ENCODE measurements at regions of chr13 and their contacts with region 1.

Region 1: GRCh38 chr13:102596147-102597028 is at the start of gene TPP2:
- DNase-seq: peak; percentile 98
- ATAC-seq: peak; percentile 94
- H3K4me3 ChIP-seq: peak within 1 kb of the TSS; percentile 80
- H3K27ac ChIP-seq: peak within 1 kb of the TSS; percentile 94
- H3K4me1 ChIP-seq: 0 out of 2 replicates have a peak, but pooled peaks cover 3% of the 10 kb centered on the region
- H3K27me3 ChIP-seq: no peaks in the 10 kb centered on the region
- CTCF ChIP-seq: no peak
- POLR2A ChIP-seq: peak; percentile 79
- RAD21 ChIP-seq: no peak
- total RNA-seq, gene TPP2: 52.9 and 62.2 TPM in 2 replicates

Region 2: GRCh38 chr13:102128216-102128810 is 468.1 kb before region 1 on chr13:
- CTCF ChIA-PET with region 1: no interaction called
- POLR2A ChIA-PET with region 1: no interaction called
- dilution Hi-C with region 1: no loop called
- in situ Hi-C with region 1: no loop called
- intact Hi-C with region 1: no loop called
- DNase-seq: peak; percentile 42
- ATAC-seq: peak; percentile 35
- H3K4me3 ChIP-seq: no peak overlapping the region
- H3K27ac ChIP-seq: no peak overlapping the region
- H3K4me1 ChIP-seq: no peaks in the 10 kb centered on the region
- H3K27me3 ChIP-seq: no peaks in the 10 kb centered on the region
- CTCF ChIP-seq: no peak
- POLR2A ChIP-seq: no peak
- RAD21 ChIP-seq: no peak

Region 3: GRCh38 chr13:102642475-102642874 is 46.1 kb after region 1 on chr13:
- CTCF ChIA-PET with region 1: no interaction called
- POLR2A ChIA-PET with region 1: no interaction called
- dilution Hi-C with region 1: no loop called
- in situ Hi-C with region 1: no loop called
- intact Hi-C with region 1: no loop called
- DNase-seq: no peak
- ATAC-seq: no peak
- H3K4me3 ChIP-seq: no peak overlapping the region
- H3K27ac ChIP-seq: no peak overlapping the region
- H3K4me1 ChIP-seq: no peaks in the 10 kb centered on the region
- H3K27me3 ChIP-seq: no peaks in the 10 kb centered on the region
- CTCF ChIP-seq: no peak
- POLR2A ChIP-seq: no peak
- RAD21 ChIP-seq: no peak

Region 4: DNA sequence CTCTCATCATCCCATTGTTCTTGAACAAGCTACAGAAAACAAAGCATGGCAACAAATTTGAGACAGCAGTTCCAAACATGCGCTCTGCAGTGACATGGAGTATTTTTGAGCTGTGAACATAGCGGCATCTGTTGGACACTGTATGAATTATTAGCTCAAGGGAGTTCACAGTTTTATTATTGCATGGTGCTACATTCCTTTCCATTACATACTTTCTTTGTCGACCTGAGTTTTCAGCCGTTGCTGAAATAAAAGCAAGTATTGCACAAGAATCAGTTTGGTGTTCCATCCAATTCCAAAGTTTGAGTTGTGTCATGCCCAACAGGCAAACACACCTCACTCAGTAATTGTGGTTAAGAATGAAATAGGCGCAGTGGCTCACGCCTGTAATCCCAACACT is 128.5 kb after region 1 on chr13:
- CTCF ChIA-PET with region 1: interaction called, 3 read pairs
- POLR2A ChIA-PET with region 1: no interaction called
- dilution Hi-C with region 1: no loop called
- in situ Hi-C with region 1: no loop called
- intact Hi-C with region 1: loop called (anchors 5 kb)
- DNase-seq: peak; percentile 24
- ATAC-seq: peak; percentile 80
- H3K4me3 ChIP-seq: no peak overlapping the region
- H3K27ac ChIP-seq: no peak overlapping the region
- H3K4me1 ChIP-seq: no peaks in the 10 kb centered on the region
- H3K27me3 ChIP-seq: no peaks in the 10 kb centered on the region; the same call in 1 of the 2 replicates
- CTCF ChIP-seq: peak; percentile 40
- POLR2A ChIP-seq: no peak
- RAD21 ChIP-seq: peak; percentile 48

Region 5: DNA sequence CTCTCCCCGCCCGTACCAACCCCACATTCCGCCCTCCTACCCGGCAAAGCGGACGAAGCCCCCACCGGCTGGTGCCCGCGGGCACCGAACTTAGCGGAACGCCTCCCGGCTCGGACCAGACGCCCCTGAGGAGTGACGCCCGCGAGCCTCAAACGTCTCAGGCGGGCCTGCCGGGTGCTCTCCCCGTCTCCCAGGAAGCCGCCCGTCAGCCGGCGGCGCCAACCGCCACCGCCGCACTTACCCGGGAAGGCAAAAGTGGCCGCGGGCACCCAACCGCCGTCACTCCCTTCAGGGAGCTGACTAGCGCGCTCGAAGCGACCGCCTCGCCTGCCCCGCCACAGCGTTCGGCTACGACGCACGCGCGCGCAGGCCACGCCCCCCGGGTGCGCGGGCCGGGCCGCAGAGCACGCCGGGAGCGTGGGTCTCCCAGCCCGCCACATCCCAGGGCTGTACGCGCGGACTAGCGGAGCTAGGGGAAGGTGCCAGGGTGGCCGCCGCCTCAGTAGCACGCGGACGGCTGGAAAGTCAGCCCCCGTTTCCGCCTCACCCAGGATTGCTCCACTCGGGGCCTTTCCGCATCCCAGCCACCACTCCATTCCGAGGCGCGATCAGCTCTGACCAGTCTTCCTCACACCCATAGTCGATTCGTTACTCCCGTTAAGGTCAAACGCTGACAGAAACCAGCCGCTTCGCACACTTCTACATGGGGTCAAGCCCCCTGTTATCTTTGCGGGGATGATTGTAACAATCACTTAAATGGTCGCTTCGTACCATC is 177.2 kb after region 1 on chr13 and contains the start of gene TEX30:
- CTCF ChIA-PET with region 1: interaction called, 3 read pairs
- POLR2A ChIA-PET with region 1: no interaction called
- dilution Hi-C with region 1: no loop called
- in situ Hi-C with region 1: no loop called
- intact Hi-C with region 1: loop called (anchors 1 kb)
- DNase-seq: peak; percentile 76
- ATAC-seq: peak; percentile 97
- H3K4me3 ChIP-seq: peak within 1 kb of the TSS; percentile 76
- H3K27ac ChIP-seq: peak within 1 kb of the TSS; percentile 85
- H3K4me1 ChIP-seq: peaks cover 2% of the 10 kb centered on the region; the same call in 1 of the 2 replicates
- H3K27me3 ChIP-seq: no peaks in the 10 kb centered on the region
- CTCF ChIP-seq: no peak
- POLR2A ChIP-seq: peak; percentile 92
- RAD21 ChIP-seq: 0 out of 2 replicates have a peak, but pooled peaks have one; percentile 2
- total RNA-seq, gene TEX30: 8.1 and 15.3 TPM in 2 replicates

Region 6: GRCh38 chr13:102800145-102801041 is 204.0 kb after region 1 on chr13:
- CTCF ChIA-PET with region 1: no interaction called
- POLR2A ChIA-PET with region 1: no interaction called
- dilution Hi-C with region 1: no loop called
- in situ Hi-C with region 1: no loop called
- intact Hi-C with region 1: loop called (anchors 2 kb)
- DNase-seq: peak; percentile 68
- ATAC-seq: peak; percentile 78
- H3K4me3 ChIP-seq: peak overlapping the region; percentile 84
- H3K27ac ChIP-seq: peak overlapping the region; percentile 68
- H3K4me1 ChIP-seq: 0 out of 2 replicates have a peak, but pooled peaks cover 3% of the 10 kb centered on the region
- H3K27me3 ChIP-seq: no peaks in the 10 kb centered on the region
- CTCF ChIP-seq: peak; percentile 66
- POLR2A ChIP-seq: peak; percentile 40; the same call in 1 of the 2 replicates
- RAD21 ChIP-seq: peak; percentile 25; the same call in 1 of the 2 replicates

Measured in IMR-90 (cell line).